PC-3 (cell line): ENCODE measurements at regions of chr18 and their contacts with region 1.

Region 1: GRCh38 chr18:45664824-45665763 is 49.8 kb downstream of the SLC14A2 start:
- DNase-seq: peak; percentile 64
- ATAC-seq: peak; percentile 76
- H3K4me3 ChIP-seq: no peak overlapping the region
- H3K27ac ChIP-seq: no peak overlapping the region
- H3K4me1 ChIP-seq: peaks cover 10% of the 10 kb centered on the region; the same call in 1 of the 2 replicates
- H3K27me3 ChIP-seq: no peaks in the 10 kb centered on the region
- CTCF ChIP-seq: peak; percentile 75

Region 2: DNA sequence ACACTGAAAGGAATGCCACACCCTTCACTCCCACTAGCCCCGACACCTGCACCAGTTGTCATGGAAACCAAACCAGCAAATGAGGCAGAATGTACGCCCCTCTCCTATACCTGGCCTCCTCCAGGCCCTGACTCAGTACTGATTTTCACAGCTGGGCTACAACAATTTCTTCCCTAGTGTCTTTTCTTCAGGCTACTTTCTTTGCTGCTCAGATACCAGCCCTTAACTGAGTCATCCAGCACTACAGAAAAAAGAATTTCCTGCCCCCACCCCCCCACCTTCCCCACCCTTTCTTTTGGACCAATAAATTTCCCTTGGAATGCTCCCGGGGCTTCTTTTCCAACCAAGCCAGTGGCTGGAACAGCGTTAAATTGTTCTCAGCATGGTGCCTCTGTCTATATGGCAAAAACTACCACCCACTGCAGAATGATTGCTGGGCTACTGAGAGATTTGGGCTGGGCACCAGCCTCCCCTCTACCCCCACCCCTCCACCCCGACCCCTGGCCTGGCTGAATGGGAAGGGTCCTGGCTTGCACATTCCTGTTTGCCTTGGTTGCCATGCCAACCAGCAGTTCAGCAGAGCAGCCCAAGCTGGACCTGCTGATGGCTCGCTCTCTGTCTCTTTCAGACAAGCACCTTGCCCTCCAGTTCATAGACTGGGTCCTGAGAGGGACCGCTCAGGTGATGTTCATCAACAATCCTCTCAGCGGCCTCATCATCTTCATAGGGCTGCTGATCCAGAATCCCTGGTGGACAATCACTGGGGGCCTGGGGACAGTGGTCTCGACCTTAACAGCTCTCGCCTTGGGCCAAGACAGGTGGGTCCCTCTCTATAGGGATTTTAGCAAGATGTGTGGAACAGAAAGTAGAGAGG is 38.5 kb before region 1 on chr18:
- CTCF ChIA-PET with region 1: no interaction called
- POLR2A ChIA-PET with region 1: no interaction called
- intact Hi-C with region 1: loop called (anchors 2 kb)
- DNase-seq: peak; percentile 62
- ATAC-seq: peak; percentile 86
- H3K4me3 ChIP-seq: no peak overlapping the region
- H3K27ac ChIP-seq: 0 out of 2 replicates have a peak overlapping the region, but pooled peaks have one; percentile 7
- H3K4me1 ChIP-seq: peaks cover 12% of the 10 kb centered on the region; the same call in 1 of the 2 replicates
- H3K27me3 ChIP-seq: no peaks in the 10 kb centered on the region
- CTCF ChIP-seq: no peak

Region 3: GRCh38 chr18:45749918-45750689 is 85.0 kb after region 1 on chr18:
- CTCF ChIA-PET with region 1: interaction called, 11 read pairs
- POLR2A ChIA-PET with region 1: no interaction called
- intact Hi-C with region 1: no loop called
- DNase-seq: peak; percentile 27
- ATAC-seq: peak; percentile 70
- H3K4me3 ChIP-seq: no peak overlapping the region
- H3K27ac ChIP-seq: peak overlapping the region; percentile 61
- H3K4me1 ChIP-seq: peaks cover 12% of the 10 kb centered on the region
- H3K27me3 ChIP-seq: no peaks in the 10 kb centered on the region
- CTCF ChIP-seq: no peak

Region 4: DNA sequence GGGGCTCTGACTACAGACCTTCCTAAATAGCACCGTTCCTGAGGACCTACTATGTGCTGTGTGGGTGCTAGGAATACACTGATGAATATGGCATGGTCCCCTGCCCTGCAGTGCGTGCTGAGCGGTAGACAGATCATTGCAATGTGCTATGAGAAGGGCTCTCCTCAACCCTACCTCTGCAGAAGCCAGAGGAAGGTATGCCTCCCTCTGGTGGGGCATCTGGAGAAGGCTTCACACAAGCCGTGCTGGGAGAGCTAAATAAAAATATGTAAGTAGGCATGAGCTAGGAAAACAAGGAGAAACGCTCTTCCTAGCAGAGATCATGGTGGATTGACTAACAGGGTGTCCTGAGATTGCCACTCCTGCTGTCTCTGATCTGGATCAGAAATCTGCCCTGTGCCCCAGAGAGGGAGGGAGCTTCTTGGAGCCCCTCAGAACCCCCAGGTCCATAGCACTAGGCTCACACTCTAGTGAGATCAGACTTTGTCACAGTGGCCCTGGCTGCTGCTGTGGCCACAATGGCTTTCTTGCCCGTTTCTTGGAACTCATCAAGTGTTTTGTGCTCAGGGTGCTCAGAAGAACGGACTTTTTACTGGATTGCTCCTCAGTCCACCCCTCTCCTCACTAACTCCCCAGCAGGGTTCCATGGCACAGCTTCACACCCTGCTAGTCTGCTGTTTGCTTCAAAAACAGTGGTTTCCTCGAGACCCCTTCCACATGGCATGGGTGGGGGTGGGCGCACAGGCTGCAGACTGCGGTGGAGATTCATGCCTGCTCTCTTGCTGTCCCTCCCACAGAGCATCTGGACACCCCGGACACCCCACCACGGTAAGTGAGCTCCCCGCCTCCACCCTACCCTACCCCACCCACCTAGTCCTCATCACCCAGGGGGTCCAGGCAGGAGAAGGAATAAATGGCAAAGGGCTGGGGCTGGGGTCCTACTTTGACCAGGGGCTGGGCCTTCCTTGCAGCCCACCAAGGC is 174.6 kb after region 1 on chr18:
- CTCF ChIA-PET with region 1: no interaction called
- POLR2A ChIA-PET with region 1: no interaction called
- intact Hi-C with region 1: no loop called
- DNase-seq: peak; percentile 62
- ATAC-seq: peak; percentile 89
- H3K4me3 ChIP-seq: no peak overlapping the region
- H3K27ac ChIP-seq: no peak overlapping the region
- H3K4me1 ChIP-seq: peaks cover 5% of the 10 kb centered on the region; the same call in 1 of the 2 replicates
- H3K27me3 ChIP-seq: no peaks in the 10 kb centered on the region
- CTCF ChIP-seq: peak; percentile 61

Region 5: GRCh38 chr18:45910405-45911023 is 245.4 kb after region 1 on chr18:
- CTCF ChIA-PET with region 1: interaction called, 7 read pairs
- POLR2A ChIA-PET with region 1: no interaction called
- intact Hi-C with region 1: loop called (anchors 1 kb)
- DNase-seq: peak; percentile 61
- ATAC-seq: peak; percentile 79
- H3K4me3 ChIP-seq: no peak overlapping the region
- H3K27ac ChIP-seq: no peak overlapping the region
- H3K4me1 ChIP-seq: no peaks in the 10 kb centered on the region
- H3K27me3 ChIP-seq: no peaks in the 10 kb centered on the region
- CTCF ChIP-seq: peak; percentile 70

Region 6: DNA sequence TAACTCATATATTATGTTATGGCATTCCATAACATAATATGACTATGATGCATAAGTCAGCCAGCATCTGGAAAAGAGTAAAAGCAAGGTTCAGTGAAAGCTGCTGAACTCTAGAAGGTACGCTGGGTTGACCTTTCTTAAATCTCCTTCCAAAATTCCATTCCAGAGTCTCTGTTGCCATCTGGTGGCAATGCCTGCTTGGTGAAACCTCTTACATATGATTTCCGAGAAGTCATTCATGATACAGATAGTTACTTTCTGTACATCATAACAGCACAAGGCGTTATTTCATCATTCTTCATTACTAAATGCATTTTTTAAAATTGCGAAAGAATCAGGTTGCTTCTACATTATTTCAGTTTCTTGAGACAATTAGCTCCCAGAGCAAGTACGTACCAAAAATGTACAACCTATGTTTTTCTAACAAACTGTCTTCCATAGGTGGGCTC is 309.0 kb after region 1 on chr18:
- CTCF ChIA-PET with region 1: no interaction called
- POLR2A ChIA-PET with region 1: no interaction called
- intact Hi-C with region 1: loop called (anchors 1 kb)
- DNase-seq: peak; percentile 72
- ATAC-seq: peak; percentile 65
- H3K4me3 ChIP-seq: no peak overlapping the region
- H3K27ac ChIP-seq: no peak overlapping the region
- H3K4me1 ChIP-seq: no peaks in the 10 kb centered on the region
- H3K27me3 ChIP-seq: no peaks in the 10 kb centered on the region
- CTCF ChIP-seq: peak; percentile 71

Region 7: DNA sequence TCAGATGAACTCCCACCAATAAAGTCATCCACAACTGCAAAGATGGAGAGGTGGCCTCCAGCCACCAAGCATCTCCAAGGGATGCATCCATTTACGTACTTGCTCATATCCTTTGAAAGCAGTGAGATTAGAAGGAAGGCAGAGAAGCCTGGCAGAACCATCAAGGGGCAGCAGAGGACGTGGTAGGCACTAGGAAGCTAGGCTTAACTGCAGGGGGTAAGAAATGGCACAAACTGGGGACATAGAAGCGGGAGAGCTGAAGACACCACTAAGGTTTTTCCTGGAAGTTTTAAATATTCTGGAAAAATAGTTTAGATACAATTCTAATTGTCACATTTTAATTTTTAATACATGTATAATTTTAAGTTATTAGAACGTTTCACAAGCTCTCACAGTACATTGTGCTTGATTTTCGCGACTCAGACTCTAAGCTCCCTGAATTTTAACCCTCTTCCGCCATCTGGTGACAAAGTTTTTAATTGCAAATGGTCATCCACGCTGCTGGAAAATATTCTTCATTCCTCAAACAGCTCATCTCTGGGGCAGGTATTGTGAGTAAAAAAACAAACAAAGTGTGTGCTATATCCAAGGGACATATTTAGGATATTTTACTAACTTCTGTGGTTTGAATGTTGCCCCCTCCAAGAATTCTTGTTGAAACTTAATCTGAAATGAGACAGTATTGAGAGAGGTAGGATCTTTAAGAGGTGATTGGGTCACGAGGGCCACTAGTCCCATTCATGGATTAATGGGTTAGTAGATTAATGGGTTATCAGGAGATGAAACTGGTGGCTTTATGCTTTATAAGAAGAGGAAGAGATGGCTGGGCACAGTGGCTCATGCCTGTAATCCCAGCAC is 408.6 kb after region 1 on chr18:
- CTCF ChIA-PET with region 1: interaction called, 3 read pairs
- POLR2A ChIA-PET with region 1: no interaction called
- intact Hi-C with region 1: loop called (anchors 2 kb)
- DNase-seq: peak; percentile 85
- ATAC-seq: peak; percentile 68
- H3K4me3 ChIP-seq: no peak overlapping the region
- H3K27ac ChIP-seq: 0 out of 2 replicates have a peak overlapping the region, but pooled peaks have one; percentile 7
- H3K4me1 ChIP-seq: no peaks in the 10 kb centered on the region
- H3K27me3 ChIP-seq: no peaks in the 10 kb centered on the region
- CTCF ChIP-seq: peak; percentile 52